ENCODE measurements at regions of chr3 and their contacts with region 1.

Region 1: DNA sequence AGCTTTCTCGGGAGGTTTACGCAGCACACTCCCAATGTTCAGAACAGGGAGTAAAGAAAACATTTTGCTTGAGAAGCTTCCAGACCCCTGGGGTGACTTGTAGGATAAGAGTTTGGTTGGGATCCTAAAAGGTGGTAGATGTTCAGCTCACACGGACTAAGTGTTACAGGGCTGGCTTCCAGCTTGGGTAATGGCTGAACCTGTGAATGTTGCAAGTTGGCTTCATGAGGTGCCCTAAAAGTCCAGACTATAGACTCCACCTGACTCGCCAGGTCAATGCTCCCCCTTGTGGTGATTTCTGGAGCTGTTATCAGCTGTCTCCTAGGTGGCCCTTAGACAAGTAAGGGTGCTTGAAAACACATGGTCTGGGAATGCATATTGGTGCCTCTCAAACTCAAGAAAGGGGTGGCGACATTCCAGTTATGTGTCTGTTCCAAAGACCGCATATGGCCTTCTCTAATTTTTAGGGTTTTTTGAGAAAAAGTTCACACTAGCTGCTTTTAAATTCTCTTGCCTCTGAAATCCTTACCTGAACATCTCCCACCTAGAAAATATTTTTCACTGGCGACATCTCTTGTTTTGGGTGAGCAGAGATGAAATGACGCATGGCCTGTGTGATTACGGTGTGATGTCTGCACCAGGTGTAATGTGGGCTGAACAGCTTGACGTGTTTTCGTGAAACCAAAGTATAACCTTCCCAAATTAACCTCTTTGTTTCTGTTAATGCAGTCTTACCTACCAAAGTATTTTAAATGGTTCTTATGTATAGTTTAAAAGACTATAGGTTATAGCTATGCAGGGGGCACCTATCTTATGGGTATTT is 175.7 kb upstream of the KBTBD8 start:
- DNase-seq: peak; percentile 75
- ATAC-seq: peak; percentile 75
- H3K4me3 Mint-ChIP-seq: no peak overlapping the region
- H3K27ac Mint-ChIP-seq: no peak overlapping the region
- H3K4me1 Mint-ChIP-seq: no peaks in the 10 kb centered on the region
- H3K27me3 Mint-ChIP-seq: peaks cover 10% of the 10 kb centered on the region

Region 2: DNA sequence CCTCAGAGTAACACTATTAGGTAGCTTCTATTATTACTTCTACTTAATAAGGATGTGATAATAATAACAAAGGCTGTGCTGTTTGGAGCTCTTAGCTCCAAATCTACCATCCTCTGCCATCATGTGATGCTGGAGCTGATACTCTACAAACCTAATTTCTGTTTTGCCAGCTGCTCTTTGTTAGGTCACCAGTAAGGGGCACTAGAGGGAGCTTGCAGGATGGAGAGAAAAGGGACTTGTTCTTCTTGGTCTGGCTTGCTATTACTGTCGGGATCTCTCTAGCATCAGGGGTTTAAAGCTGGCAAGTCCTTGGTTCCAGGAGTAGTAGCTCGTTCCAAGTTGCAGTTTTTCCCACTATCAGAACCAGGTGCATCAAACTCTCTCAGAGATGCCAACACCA is 19.2 kb before region 1 on chr3:
- CTCF ChIA-PET with region 1: interaction called, 20 read pairs
- POLR2A ChIA-PET with region 1: no interaction called
- DNase-seq: no peak
- ATAC-seq: no peak
- H3K4me3 Mint-ChIP-seq: no peak overlapping the region
- H3K27ac Mint-ChIP-seq: no peak overlapping the region
- H3K4me1 Mint-ChIP-seq: peaks cover 7% of the 10 kb centered on the region
- H3K27me3 Mint-ChIP-seq: peaks cover 2% of the 10 kb centered on the region

Region 3: GRCh38 chr3:66980791-66981190 is 158.4 kb after region 1 on chr3:
- CTCF ChIA-PET with region 1: no interaction called
- POLR2A ChIA-PET with region 1: no interaction called
- DNase-seq: no peak
- ATAC-seq: no peak
- H3K4me3 Mint-ChIP-seq: no peak overlapping the region
- H3K27ac Mint-ChIP-seq: no peak overlapping the region
- H3K4me1 Mint-ChIP-seq: no peaks in the 10 kb centered on the region
- H3K27me3 Mint-ChIP-seq: peaks cover 13% of the 10 kb centered on the region